Dendritic cell treated with granulocyte-macrophage colony-stimulating factor and Interleukin-4, amounts not matched to agents 40 ng/mL and 50 ng/mL, for 4 days (primary cell): ENCODE measurements at regions of chr7 and their contacts with region 1.

Region 1: GRCh38 chr7:75842836-75843446 is 29.3 kb upstream of the CCL24 start:
- H3K4me3 Mint-ChIP-seq: peak overlapping the region; percentile 71
- H3K27ac Mint-ChIP-seq: peak overlapping the region; percentile 95
- H3K4me1 Mint-ChIP-seq: peaks cover 76% of the 10 kb centered on the region
- H3K27me3 Mint-ChIP-seq: no peaks in the 10 kb centered on the region

Region 2: DNA sequence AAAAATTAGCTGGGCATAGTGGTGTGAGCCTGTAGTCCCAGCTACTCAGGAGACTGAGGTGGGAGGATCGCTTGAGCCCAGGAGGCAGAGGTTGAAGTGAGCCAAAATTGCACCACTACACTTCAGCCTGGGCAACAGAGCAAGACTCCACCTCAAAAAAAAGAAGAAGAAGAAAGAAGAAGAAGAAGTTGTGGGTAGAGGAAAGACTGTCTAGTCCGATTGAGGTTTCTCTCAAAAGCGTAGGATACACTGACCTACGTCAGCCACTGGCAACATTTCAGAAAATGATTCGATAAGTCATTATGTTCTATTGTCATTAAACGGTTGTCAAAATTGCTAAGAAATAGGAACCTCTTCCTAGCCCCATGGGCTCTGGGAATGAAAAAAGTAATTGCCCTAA is 13.6 kb after region 1 on chr7:
- intact Hi-C with region 1: loop called (anchors 2 kb)
- H3K4me3 Mint-ChIP-seq: no peak overlapping the region
- H3K27ac Mint-ChIP-seq: peak overlapping the region; percentile 83
- H3K4me1 Mint-ChIP-seq: peaks cover 69% of the 10 kb centered on the region
- H3K27me3 Mint-ChIP-seq: no peaks in the 10 kb centered on the region

Region 3: GRCh38 chr7:75866489-75867389 is 23.8 kb after region 1 on chr7:
- intact Hi-C with region 1: no loop called
- H3K4me3 Mint-ChIP-seq: peak overlapping the region; percentile 24
- H3K27ac Mint-ChIP-seq: peak overlapping the region; percentile 75
- H3K4me1 Mint-ChIP-seq: peaks cover 71% of the 10 kb centered on the region
- H3K27me3 Mint-ChIP-seq: peaks cover 1% of the 10 kb centered on the region

Region 4: DNA sequence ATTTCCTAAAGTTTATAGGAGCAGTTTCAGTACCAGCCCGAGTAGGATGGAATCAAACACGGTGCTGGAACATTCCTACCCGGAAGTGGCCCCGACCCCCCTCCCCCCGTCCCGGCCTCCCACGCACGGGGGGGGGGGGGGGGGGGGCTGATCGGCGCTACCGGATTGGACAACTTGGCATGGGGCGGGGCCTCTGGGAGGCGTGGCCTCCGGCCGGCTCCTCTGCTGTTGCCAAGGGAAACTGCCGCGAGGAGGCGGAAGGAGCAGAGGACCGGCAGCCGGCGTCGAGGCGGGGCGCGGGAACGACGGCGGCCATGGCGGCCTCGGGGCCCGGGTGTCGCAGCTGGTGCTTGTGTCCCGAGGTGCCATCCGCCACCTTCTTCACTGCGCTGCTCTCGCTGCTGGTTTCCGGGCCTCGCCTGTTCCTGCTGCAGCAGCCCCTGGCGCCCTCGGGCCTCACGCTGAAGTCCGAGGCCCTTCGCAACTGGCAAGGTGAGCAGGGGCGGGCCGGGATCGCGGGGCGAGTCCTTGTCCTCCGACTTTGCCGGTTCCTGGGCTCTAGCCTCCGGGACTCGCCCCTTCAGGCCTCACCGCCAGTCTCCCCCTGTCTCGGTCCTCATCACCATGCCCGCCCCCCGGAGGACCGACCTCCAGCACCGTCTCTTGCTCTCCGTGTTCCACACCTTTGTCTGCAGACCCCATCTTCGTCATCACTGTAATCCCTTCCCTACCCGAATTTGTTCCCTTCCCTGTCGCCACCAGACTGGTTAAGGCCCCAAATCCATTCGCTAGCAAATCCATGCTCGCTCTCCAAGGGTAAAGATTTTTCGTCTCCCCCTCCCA is 36.0 kb after region 1 on chr7 and contains the start of gene RHBDD2:
- intact Hi-C with region 1: no loop called
- H3K4me3 Mint-ChIP-seq: peak within 1 kb of the TSS; percentile 95
- H3K27ac Mint-ChIP-seq: peak within 1 kb of the TSS; percentile 83
- H3K4me1 Mint-ChIP-seq: peaks cover 78% of the 10 kb centered on the region
- H3K27me3 Mint-ChIP-seq: no peaks in the 10 kb centered on the region